AG04450 (cell line): ENCODE measurements at regions of chr7 and their contacts with region 1.

Region 1: DNA sequence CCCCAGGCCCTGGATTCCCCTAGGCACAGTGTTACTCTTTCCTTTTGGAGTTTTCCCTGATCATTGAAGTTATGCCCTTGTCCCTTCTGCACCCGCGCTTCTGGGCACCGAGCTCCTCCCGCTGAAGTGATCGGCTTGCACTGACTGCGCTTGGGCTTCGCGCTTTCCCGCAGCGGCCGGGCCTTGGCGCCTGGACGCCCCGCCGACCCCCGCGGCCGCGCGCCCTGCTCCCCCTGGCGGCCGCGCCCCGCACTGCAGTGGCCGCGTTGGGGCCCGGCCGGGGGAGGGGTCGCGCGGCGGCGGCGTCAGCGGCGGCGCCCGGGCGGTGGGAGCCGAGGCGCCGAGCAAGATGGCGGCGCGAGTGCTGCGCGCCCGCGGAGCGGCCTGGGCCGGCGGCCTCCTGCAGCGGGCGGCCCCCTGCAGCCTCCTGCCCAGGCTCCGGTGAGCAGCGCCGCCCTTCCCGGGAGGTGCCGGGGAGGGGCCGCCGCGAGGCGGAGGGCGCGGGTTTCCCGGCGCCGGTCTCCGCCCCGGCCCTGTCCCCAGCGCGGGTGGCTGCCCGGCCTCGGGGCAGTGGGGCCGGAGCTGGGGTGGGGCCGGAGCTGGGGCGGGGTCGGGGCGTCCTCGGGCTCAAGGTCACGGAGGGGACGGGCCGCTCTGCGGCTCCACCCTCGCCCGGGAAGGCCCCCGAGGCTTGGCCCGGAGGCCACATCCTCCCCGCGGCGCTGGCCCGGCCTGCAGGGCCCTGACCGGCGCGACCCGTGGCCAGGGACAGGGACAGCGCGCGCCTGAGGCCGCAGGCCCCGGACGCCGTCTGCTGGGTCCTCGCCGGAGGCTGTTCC is at the start of gene NIPSNAP2:
- DNase-seq: no peak
- H3K4me3 ChIP-seq: peak within 1 kb of the TSS; percentile 82
- H3K27ac ChIP-seq: peak within 1 kb of the TSS; percentile 70
- H3K27me3 ChIP-seq: no peaks in the 10 kb centered on the region
- CTCF ChIP-seq: peak; percentile 16; the same call in 1 of the 2 replicates
- polyA plus RNA-seq, gene NIPSNAP2: 61.9 and 90.6 TPM in 2 replicates

Region 2: GRCh38 chr7:55641273-55641691 is 323.2 kb before region 1 on chr7:
- CTCF ChIA-PET with region 1: interaction called, 23 read pairs
- POLR2A ChIA-PET with region 1: interaction called, 3 read pairs
- DNase-seq: peak; percentile 53
- H3K4me3 ChIP-seq: no peak overlapping the region
- H3K27ac ChIP-seq: no peak overlapping the region
- H3K27me3 ChIP-seq: no peaks in the 10 kb centered on the region
- CTCF ChIP-seq: peak; percentile 79

Region 3: GRCh38 chr7:55953707-55954475 is 10.6 kb before region 1 on chr7:
- CTCF ChIA-PET with region 1: interaction called, 25 read pairs
- POLR2A ChIA-PET with region 1: interaction called, 5 read pairs
- DNase-seq: no peak
- H3K4me3 ChIP-seq: no peak overlapping the region
- H3K27ac ChIP-seq: no peak overlapping the region
- H3K27me3 ChIP-seq: no peaks in the 10 kb centered on the region
- CTCF ChIP-seq: no peak

Region 4: GRCh38 chr7:55975988-55976633 is 11.6 kb after region 1 on chr7:
- CTCF ChIA-PET with region 1: interaction called, 12 read pairs
- POLR2A ChIA-PET with region 1: no interaction called
- DNase-seq: no peak
- H3K4me3 ChIP-seq: no peak overlapping the region
- H3K27ac ChIP-seq: no peak overlapping the region
- H3K27me3 ChIP-seq: no peaks in the 10 kb centered on the region
- CTCF ChIP-seq: no peak